Activated CD8-positive, alpha-beta T cell treated with anti-CD3 and anti-CD28 coated beads, Interleukin-2, amount 10 ng/mL, durations not matched to agents 7 days and 5 days (primary cell): ENCODE measurements at regions of chr11 and their contacts with region 1.

Region 1: GRCh38 chr11:118145285-118146227 is 7.1 kb downstream of the SCN4B start:
- DNase-seq: peak; percentile 92
- ATAC-seq: peak; percentile 97
- H3K4me3 Mint-ChIP-seq: peak overlapping the region; percentile 79
- H3K27ac Mint-ChIP-seq: no peak overlapping the region
- H3K4me1 Mint-ChIP-seq: peaks cover 19% of the 10 kb centered on the region
- H3K27me3 Mint-ChIP-seq: peaks cover 54% of the 10 kb centered on the region

Region 2: DNA sequence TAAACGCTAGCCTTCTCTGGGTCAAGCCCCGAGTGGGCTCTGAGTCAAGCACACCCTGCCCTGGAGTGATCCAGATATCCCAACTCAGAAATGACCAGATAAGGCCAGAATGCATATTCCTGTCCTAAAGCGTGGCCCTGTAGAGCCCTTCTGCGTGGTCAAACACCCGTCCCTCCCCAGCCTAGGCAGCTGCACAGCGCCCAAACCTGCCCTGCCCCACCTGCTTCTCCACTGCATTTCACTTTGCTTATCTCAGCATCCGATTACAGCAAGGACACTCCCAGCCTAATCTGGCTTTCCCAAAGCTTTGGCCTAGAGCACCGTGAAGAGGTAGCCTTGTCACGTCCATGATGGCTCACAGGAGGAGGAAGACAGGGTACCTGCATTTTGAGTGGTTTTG is 80.6 kb before region 1 on chr11:
- CTCF ChIA-PET with region 1: no interaction called
- POLR2A ChIA-PET with region 1: no interaction called
- DNase-seq: no peak
- ATAC-seq: no peak
- H3K4me3 Mint-ChIP-seq: no peak overlapping the region
- H3K27ac Mint-ChIP-seq: no peak overlapping the region
- H3K4me1 Mint-ChIP-seq: peaks cover 12% of the 10 kb centered on the region
- H3K27me3 Mint-ChIP-seq: peaks cover 6% of the 10 kb centered on the region

Region 3: GRCh38 chr11:118098996-118099837 is 46.3 kb before region 1 on chr11:
- CTCF ChIA-PET with region 1: no interaction called
- POLR2A ChIA-PET with region 1: no interaction called
- DNase-seq: no peak
- ATAC-seq: no peak
- H3K4me3 Mint-ChIP-seq: no peak overlapping the region
- H3K27ac Mint-ChIP-seq: no peak overlapping the region
- H3K4me1 Mint-ChIP-seq: no peaks in the 10 kb centered on the region
- H3K27me3 Mint-ChIP-seq: peaks cover 17% of the 10 kb centered on the region

Region 4: GRCh38 chr11:118156531-118157185 is 11.1 kb after region 1 on chr11:
- CTCF ChIA-PET with region 1: interaction called, 38 read pairs
- POLR2A ChIA-PET with region 1: no interaction called
- DNase-seq: peak; percentile 58
- ATAC-seq: peak; percentile 74
- H3K4me3 Mint-ChIP-seq: no peak overlapping the region
- H3K27ac Mint-ChIP-seq: no peak overlapping the region
- H3K4me1 Mint-ChIP-seq: peaks cover 29% of the 10 kb centered on the region
- H3K27me3 Mint-ChIP-seq: peaks cover 79% of the 10 kb centered on the region